ENCODE measurements at regions of chr2 and their contacts with region 1.

Region 1: DNA sequence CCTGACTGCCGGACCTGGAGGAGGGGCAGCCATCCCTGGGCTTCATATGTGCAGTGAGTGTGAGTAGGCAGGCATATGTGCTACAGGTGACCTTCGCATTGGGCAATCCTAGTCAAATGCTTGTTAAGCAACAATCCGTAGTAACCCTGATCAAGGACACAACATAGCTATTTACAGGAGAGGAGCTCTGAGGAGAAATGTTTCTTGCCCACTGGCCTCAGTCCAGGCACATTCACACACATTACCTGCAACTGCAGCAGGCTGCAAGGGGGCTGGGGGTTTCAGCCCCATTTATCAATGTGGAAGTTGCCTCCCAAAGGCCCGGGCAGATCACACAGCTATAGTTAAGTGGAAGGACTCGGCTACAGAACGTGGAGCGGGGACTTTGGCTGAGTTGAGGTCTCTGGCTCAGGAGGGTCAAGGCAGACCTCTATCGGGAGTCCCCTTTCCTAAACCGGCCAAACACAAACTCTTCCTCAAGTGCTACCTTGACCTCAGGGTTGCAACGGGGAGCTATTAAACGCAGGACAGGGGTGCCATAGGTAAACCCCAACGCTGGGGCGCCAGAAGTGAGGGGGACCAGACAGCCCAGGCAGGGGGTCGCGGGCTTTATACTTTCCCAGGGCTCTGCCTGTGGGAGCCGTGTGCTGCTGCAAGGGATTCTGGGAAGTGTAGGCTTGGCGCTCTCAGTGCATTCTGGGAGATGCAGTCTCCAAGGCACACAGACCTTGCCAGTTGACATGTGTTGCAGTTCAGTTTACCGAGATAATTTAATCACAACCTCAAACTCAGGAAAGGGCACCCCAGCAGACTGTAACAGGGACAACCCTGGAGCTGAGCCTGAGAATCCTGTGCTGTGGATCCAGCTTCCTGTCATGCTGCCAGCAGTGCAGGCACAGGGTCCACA is 9.4 kb downstream of the KHK start:
- DNase-seq: peak; percentile 80

Region 2: DNA sequence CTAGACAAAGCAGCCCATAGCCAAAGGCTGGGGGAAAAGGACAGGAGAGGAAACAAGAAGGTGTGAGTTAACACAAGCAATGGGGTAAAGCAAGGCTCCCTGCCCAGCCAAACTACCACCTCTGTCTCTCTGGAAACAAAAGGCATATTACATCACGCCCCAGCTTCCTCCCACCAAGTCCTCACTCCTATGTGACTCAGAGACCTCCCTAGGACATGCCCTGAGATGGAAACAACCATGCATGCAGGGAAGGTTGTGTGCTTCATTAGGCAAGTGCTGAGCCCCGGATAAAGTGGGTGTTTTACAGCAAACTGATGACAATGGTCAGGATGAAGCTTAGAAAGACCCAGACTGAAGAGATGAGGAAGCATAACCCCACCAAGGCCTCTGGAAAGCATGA is 106.9 kb after region 1 on chr2:
- intact Hi-C with region 1: loop called (anchors 5 kb)
- DNase-seq: no peak

Region 3: GRCh38 chr2:27281855-27282559 is 186.0 kb after region 1 on chr2 and contains the start of gene TRIM54:
- intact Hi-C with region 1: loop called (anchors 1 to 5 kb)
- DNase-seq: peak; percentile 72
- total RNA-seq, gene TRIM54: 0.32 to 0.52 TPM